ENCODE measurements at regions of chrX and their contacts with region 1.

Region 1: DNA sequence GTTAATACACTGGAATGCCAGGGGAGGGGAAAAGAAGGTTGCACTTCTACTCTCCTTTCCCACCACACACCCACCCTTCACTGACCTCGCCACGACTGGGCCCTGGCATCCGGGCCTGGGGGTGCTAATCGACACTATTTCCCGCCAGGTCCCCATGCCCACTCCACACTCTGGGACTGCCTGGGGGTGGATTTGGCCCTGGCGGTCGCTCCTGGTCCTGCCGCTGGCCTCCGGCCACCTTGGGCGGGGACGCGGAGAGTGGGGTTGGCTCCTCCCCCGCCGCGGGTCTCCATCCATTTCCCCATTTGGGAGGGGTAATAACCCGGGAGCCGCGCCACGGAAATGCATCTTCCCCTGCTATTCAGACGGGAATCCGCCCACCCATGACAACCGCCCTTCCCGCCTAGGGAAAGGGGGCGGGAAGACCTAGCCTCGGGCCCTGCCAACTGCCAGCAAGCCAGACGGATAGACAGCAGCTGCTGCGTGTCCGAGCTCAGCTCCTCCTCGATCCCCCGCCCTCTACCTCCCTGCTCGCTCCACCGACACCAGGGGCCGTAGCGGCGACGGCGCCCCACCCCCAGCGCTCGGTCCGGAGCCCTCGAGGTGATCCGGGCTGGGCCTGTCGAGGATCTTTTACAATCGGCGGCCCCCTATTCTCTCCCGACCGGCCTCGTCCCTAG is 78.1 kb downstream of the RLIM start:
- DNase-seq: peak; percentile 80 to 93
- H3K4me3 ChIP-seq: peak overlapping the region; percentile 55 to 63
- H3K27ac ChIP-seq: peak overlapping the region; percentile 88 to 94
- H3K4me1 ChIP-seq: peaks cover 0 to 13% (median 4%) of the 10 kb centered on the region in 4 donors
- H3K27me3 ChIP-seq: no peaks in the 10 kb centered on the region
- CTCF ChIP-seq: peak; percentile 42 to 61

Region 2: GRCh38 chrX:74259885-74260491 is 276.3 kb before region 1 on chrX:
- intact Hi-C with region 1: no loop called
- DNase-seq: no peak
- H3K4me3 ChIP-seq: no peak overlapping the region
- H3K27ac ChIP-seq: no peak overlapping the region
- H3K4me1 ChIP-seq: peaks cover 0 to 26% (median 1%) of the 10 kb centered on the region in 4 donors
- H3K27me3 ChIP-seq: no peaks in the 10 kb centered on the region
- CTCF ChIP-seq: no peak

Region 3: DNA sequence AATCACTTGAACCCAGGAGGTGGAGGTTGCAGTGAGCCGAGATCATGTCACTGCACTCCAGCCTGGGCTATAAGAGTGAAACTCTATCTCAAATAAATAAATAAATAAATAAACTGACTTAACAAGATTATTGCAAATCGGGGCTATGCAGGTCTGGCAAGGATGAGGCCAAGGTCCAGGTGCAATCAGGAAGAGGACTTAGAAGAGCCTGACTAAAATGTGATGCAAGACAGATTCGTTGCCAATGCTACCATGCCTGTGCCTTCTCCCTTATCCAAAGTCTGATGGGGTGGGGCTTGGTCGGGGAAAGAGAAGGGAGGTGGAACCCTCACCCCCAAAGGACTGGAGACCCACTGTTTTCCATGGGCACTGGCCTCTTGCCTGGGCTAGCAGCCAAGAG is 217.6 kb before region 1 on chrX:
- intact Hi-C with region 1: no loop called
- DNase-seq: no peak
- H3K4me3 ChIP-seq: no peak overlapping the region
- H3K27ac ChIP-seq: no peak overlapping the region
- H3K4me1 ChIP-seq: no peaks in the 10 kb centered on the region
- H3K27me3 ChIP-seq: no peaks in the 10 kb centered on the region
- CTCF ChIP-seq: no peak

Region 4: DNA sequence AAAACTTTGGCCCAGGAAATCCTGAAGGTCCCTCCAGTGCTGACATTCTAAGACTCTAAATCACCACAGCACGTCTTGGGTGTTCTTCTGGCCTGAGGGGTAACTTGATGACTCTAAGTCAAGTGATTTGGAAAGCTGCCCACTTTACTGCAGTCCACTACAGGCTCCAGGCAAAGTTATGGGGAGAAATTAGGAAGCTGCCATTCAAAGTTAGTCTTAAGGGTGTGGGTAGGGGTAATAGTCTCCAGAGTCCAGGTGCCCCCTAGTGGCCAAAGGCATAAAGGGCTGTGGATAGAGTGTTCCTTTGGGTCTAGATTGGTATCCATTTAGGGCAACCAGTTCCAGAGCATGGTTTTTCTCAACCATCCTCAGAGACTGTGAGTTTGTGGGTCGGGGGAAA is 153.7 kb before region 1 on chrX:
- intact Hi-C with region 1: loop called (anchors 10 kb)
- DNase-seq: peak; percentile 71 to 74
- H3K4me3 ChIP-seq: no peak overlapping the region
- H3K27ac ChIP-seq: no peak overlapping the region
- H3K4me1 ChIP-seq: no peaks in the 10 kb centered on the region
- H3K27me3 ChIP-seq: no peaks in the 10 kb centered on the region
- CTCF ChIP-seq: peak; percentile 48 to 65

Region 5: GRCh38 chrX:74421036-74421739 is 115.1 kb before region 1 on chrX and contains the start of gene SLC16A2:
- intact Hi-C with region 1: loop called (anchors 10 kb)
- DNase-seq: peak; percentile 81 to 90
- H3K4me3 ChIP-seq: peak within 1 kb of the TSS; percentile 58 to 70
- H3K27ac ChIP-seq: peak within 1 kb of the TSS; percentile 97
- H3K4me1 ChIP-seq: peaks cover 0 to 12% (median 3%) of the 10 kb centered on the region in 4 donors
- H3K27me3 ChIP-seq: no peaks in the 10 kb centered on the region
- CTCF ChIP-seq: no peak

Measured in tibial artery (tissue), 4 donors.